ENCODE measurements at regions of chr6 and their contacts with region 1.

Region 1: GRCh38 chr6:71621918-71622519 is 264.3 kb upstream of the RIMS1 start:
- DNase-seq: peak in 1 of 2 experiments; percentile 9
- H3K4me3 ChIP-seq: no peak overlapping the region
- H3K4me3 Mint-ChIP-seq: no peak overlapping the region
- H3K27ac Mint-ChIP-seq: no peak overlapping the region
- H3K4me1 ChIP-seq: no peaks in the 10 kb centered on the region; the same call in 1 of the 2 replicates
- H3K4me1 Mint-ChIP-seq: peaks cover 7% of the 10 kb centered on the region
- H3K27me3 ChIP-seq: no peaks in the 10 kb centered on the region
- H3K27me3 Mint-ChIP-seq: no peaks in the 10 kb centered on the region
- CTCF ChIP-seq: peak; percentile 45 to 56

Region 2: DNA sequence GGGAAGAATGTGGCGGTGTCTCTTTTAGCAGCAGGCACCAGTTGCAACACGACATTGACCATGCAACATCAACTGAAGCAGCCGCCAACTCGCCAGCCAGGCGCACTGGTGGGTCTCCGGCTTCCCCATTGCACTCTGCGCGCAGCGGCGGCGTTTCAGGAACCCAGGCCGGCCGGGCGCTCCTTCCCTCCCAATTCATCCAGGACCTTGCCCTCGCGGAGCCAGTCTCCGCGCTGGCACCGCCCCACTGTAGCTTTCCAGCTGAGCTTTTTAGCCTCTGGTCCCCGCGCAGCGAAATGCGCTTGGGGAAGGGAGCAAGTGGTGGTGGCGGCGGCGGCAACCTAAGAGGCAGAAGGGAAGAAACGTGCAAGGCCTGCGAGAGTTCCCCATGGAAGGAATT is 33.5 kb before region 1 on chr6:
- CTCF ChIA-PET with region 1: no interaction called
- POLR2A ChIA-PET with region 1: no interaction called
- intact Hi-C with region 1: no loop called
- DNase-seq: no peak
- H3K4me3 ChIP-seq: no peak overlapping the region
- H3K4me3 Mint-ChIP-seq: no peak overlapping the region
- H3K27ac Mint-ChIP-seq: no peak overlapping the region
- H3K4me1 ChIP-seq: no peaks in the 10 kb centered on the region
- H3K4me1 Mint-ChIP-seq: no peaks in the 10 kb centered on the region
- H3K27me3 ChIP-seq: no peaks in the 10 kb centered on the region
- H3K27me3 Mint-ChIP-seq: no peaks in the 10 kb centered on the region
- CTCF ChIP-seq: no peak

Region 3: GRCh38 chr6:71678091-71678490 is 56.1 kb after region 1 on chr6:
- CTCF ChIA-PET with region 1: no interaction called
- POLR2A ChIA-PET with region 1: no interaction called
- intact Hi-C with region 1: loop called (anchors 5 kb)
- DNase-seq: no peak
- H3K4me3 ChIP-seq: no peak overlapping the region
- H3K4me3 Mint-ChIP-seq: no peak overlapping the region
- H3K27ac Mint-ChIP-seq: no peak overlapping the region
- H3K4me1 ChIP-seq: peaks cover 65% of the 10 kb centered on the region
- H3K4me1 Mint-ChIP-seq: peaks cover 30% of the 10 kb centered on the region
- H3K27me3 ChIP-seq: no peaks in the 10 kb centered on the region
- H3K27me3 Mint-ChIP-seq: no peaks in the 10 kb centered on the region
- CTCF ChIP-seq: no peak

Region 4: DNA sequence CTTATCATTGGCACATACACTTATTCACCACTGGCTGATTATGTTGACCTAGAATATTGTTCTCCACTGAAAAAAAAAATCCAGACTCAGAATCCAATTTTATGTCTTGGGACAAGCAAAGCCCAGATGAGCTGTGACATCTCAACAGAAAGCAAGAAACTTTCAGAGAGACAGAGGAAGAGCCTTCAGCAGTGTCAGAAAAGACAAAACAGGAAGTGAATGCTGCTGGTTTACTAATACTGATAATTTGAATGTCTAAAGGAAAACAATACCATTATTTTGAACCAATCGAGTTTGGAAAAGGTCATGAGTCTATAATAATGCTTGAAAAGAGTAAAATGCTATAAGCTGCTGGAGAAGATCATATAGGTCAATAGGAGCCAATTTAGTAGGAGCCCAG is 84.5 kb after region 1 on chr6:
- CTCF ChIA-PET with region 1: no interaction called
- POLR2A ChIA-PET with region 1: no interaction called
- intact Hi-C with region 1: no loop called
- DNase-seq: no peak
- H3K4me3 ChIP-seq: no peak overlapping the region
- H3K4me3 Mint-ChIP-seq: no peak overlapping the region
- H3K27ac Mint-ChIP-seq: no peak overlapping the region
- H3K4me1 ChIP-seq: no peaks in the 10 kb centered on the region
- H3K4me1 Mint-ChIP-seq: no peaks in the 10 kb centered on the region
- H3K27me3 ChIP-seq: no peaks in the 10 kb centered on the region
- H3K27me3 Mint-ChIP-seq: no peaks in the 10 kb centered on the region
- CTCF ChIP-seq: no peak

Region 5: GRCh38 chr6:71855406-71855805 is 233.4 kb after region 1 on chr6:
- CTCF ChIA-PET with region 1: no interaction called
- POLR2A ChIA-PET with region 1: no interaction called
- intact Hi-C with region 1: loop called (anchors 1 kb)
- DNase-seq: peak in 1 of 2 experiments; percentile 7
- H3K4me3 ChIP-seq: no peak overlapping the region
- H3K4me3 Mint-ChIP-seq: no peak overlapping the region
- H3K27ac Mint-ChIP-seq: no peak overlapping the region
- H3K4me1 ChIP-seq: 0 out of 2 replicates have a peak, but pooled peaks cover 4% of the 10 kb centered on the region
- H3K4me1 Mint-ChIP-seq: peaks cover 9% of the 10 kb centered on the region
- H3K27me3 ChIP-seq: no peaks in the 10 kb centered on the region
- H3K27me3 Mint-ChIP-seq: no peaks in the 10 kb centered on the region
- CTCF ChIP-seq: peak; percentile 11 to 32

Region 6: DNA sequence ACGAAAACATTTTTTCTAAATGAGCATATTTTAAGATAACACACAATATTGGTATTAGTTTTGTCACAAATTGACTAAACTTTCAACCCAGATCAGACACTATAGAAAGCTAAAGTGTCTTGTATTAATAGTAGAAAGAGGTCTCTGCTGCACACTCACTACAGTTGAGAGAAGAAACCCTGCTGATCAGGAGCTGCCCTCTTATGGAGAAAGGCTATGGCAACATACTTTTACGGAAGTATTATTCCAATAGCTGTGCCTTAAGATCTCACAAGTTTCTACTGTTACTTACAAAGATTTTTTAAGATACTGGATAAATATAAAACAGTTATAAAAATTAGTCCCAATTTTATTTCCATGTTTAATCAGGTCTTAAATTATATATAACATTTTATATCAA is 420.1 kb after region 1 on chr6:
- CTCF ChIA-PET with region 1: no interaction called
- POLR2A ChIA-PET with region 1: no interaction called
- intact Hi-C with region 1: loop called (anchors 1 kb)
- DNase-seq: peak in 1 of 2 experiments; percentile 18
- H3K4me3 ChIP-seq: no peak overlapping the region
- H3K4me3 Mint-ChIP-seq: no peak overlapping the region
- H3K27ac Mint-ChIP-seq: no peak overlapping the region
- H3K4me1 ChIP-seq: no peaks in the 10 kb centered on the region
- H3K4me1 Mint-ChIP-seq: no peaks in the 10 kb centered on the region
- H3K27me3 ChIP-seq: no peaks in the 10 kb centered on the region
- H3K27me3 Mint-ChIP-seq: no peaks in the 10 kb centered on the region
- CTCF ChIP-seq: peak; percentile 19 to 51

Region 7: DNA sequence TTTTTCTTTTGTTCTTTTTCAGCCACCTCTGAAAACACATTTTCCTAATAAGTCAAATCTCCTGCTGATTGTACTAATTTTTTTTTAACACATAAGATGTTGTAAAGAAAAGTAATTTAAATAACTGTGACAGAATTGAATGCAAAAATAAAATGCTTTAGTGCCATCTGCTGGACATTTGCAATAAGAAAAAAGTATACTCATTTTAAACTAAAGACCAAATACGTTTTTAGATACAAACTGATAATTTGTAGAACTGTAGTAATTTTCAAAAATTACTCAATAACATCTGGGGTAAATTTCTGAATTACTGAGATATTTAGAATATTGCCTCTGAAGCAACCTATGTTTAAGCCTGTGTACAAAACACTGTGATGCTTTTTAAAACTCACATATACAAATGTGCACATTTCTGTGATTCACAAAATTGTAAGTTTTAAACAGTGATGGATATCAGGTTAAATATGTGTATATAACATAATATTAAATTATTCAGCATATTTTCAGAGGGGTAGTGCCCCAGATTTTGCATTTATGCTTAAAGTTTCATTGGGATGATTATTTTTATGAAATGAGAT is 463.1 kb after region 1 on chr6:
- CTCF ChIA-PET with region 1: no interaction called
- POLR2A ChIA-PET with region 1: no interaction called
- intact Hi-C with region 1: loop called (anchors 1 kb)
- DNase-seq: peak in 1 of 2 experiments; percentile 6
- H3K4me3 ChIP-seq: no peak overlapping the region
- H3K4me3 Mint-ChIP-seq: no peak overlapping the region
- H3K27ac Mint-ChIP-seq: no peak overlapping the region
- H3K4me1 ChIP-seq: no peaks in the 10 kb centered on the region
- H3K4me1 Mint-ChIP-seq: no peaks in the 10 kb centered on the region
- H3K27me3 ChIP-seq: no peaks in the 10 kb centered on the region
- H3K27me3 Mint-ChIP-seq: no peaks in the 10 kb centered on the region
- CTCF ChIP-seq: peak; percentile 32 to 53